Activated T-helper 2 cell treated with anti-CD3 and anti-CD28 coated beads, Interferon-gamma antibody, Interleukin-2, Interleukin-4, amounts not matched to agents 10 μg/mL and 5 μg/mL and 100 μg/mL, durations not matched to agents 14 hours and 24 hours and 36 hours (primary cell): ENCODE measurements at regions of chr7 and their contacts with region 1.

Region 1: GRCh38 chr7:30740424-30741181 is 11.3 kb upstream of the INMT start:
- DNase-seq: peak; percentile 62
- H3K4me3 Mint-ChIP-seq: no peak overlapping the region
- H3K27ac Mint-ChIP-seq: no peak overlapping the region
- H3K4me1 Mint-ChIP-seq: peaks cover 18% of the 10 kb centered on the region
- H3K27me3 Mint-ChIP-seq: no peaks in the 10 kb centered on the region

Region 2: GRCh38 chr7:30548762-30549344 is 191.8 kb before region 1 on chr7:
- intact Hi-C with region 1: loop called (anchors 5 kb)
- DNase-seq: no peak
- H3K4me3 Mint-ChIP-seq: no peak overlapping the region
- H3K27ac Mint-ChIP-seq: no peak overlapping the region
- H3K4me1 Mint-ChIP-seq: peaks cover 10% of the 10 kb centered on the region
- H3K27me3 Mint-ChIP-seq: no peaks in the 10 kb centered on the region

Region 3: GRCh38 chr7:30702200-30702599 is 38.4 kb before region 1 on chr7:
- intact Hi-C with region 1: loop called (anchors 1 kb)
- DNase-seq: no peak
- H3K4me3 Mint-ChIP-seq: no peak overlapping the region
- H3K27ac Mint-ChIP-seq: no peak overlapping the region
- H3K4me1 Mint-ChIP-seq: no peaks in the 10 kb centered on the region
- H3K27me3 Mint-ChIP-seq: peaks cover 3% of the 10 kb centered on the region